HCT116 (cell line): ENCODE measurements at regions of chr12 and their contacts with region 1.

Region 1: GRCh38 chr12:47071241-47071852 is 8.1 kb upstream of the PCED1B start:
- DNase-seq: no peak
- ATAC-seq: peak; percentile 76
- H3K4me3 ChIP-seq: no peak overlapping the region
- H3K27ac ChIP-seq: no peak overlapping the region
- H3K4me1 ChIP-seq: no peaks in the 10 kb centered on the region
- H3K27me3 ChIP-seq: no peaks in the 10 kb centered on the region
- CTCF ChIP-seq: peak; percentile 37 to 69 (median 65); a peak in 5 of 6 replicates
- POLR2A ChIP-seq: no peak
- RAD21 ChIP-seq: peak; percentile 57

Region 2: DNA sequence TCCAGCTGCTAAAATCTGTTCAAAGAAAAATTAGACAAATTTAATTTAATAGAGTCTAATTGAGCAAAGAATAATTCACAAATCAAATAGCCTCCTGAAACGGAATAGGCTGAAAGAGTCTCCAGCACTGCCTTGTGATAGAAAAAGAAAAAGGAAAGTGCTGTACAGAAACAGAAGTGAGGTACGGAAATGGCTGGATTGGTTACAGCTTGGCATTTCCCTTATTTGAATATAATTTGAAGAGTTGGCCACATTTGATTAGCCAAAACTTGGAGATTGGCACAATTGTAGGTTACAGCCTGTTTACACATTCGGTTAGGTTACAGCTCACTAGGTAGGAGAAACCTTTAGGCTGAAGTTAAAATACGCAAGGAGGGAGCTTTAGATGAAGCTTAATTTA is 16.7 kb before region 1 on chr12:
- CTCF ChIA-PET with region 1: interaction called, 15 read pairs
- POLR2A ChIA-PET with region 1: no interaction called
- RAD21 ChIA-PET with region 1: no interaction called
- intact Hi-C with region 1: no loop called
- DNase-seq: no peak
- ATAC-seq: no peak
- H3K4me3 ChIP-seq: no peak overlapping the region
- H3K27ac ChIP-seq: no peak overlapping the region
- H3K4me1 ChIP-seq: no peaks in the 10 kb centered on the region
- H3K27me3 ChIP-seq: no peaks in the 10 kb centered on the region
- CTCF ChIP-seq: no peak
- POLR2A ChIP-seq: no peak
- RAD21 ChIP-seq: no peak

Region 3: DNA sequence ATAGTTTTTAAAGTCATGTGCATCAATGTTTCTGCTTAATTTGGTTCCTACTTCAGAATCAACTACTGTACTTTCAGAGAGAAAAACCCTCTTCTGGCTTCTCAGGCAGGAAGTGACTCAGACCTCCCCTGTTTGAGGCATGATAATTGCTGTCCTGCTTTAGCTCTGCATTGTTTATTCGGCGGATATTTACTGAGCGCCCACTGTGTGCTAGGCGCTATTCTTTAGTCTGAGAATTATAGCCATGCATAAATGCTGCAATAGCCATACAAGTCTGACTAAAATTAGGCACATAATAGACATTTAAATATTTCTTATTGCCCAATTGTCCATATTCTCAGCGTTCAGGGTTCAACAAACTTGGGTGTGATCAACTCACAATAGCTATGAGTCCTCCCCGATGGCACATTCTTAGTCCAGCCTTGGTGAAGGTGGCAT is 14.5 kb after region 1 on chr12:
- CTCF ChIA-PET with region 1: interaction called, 17 read pairs
- POLR2A ChIA-PET with region 1: no interaction called
- RAD21 ChIA-PET with region 1: no interaction called
- intact Hi-C with region 1: no loop called
- DNase-seq: no peak
- ATAC-seq: peak; percentile 65
- H3K4me3 ChIP-seq: peak overlapping the region in 1 of 2 experiments; percentile 42; a peak in 3 of 4 replicates
- H3K27ac ChIP-seq: no peak overlapping the region
- H3K4me1 ChIP-seq: peaks cover 16 to 60% of the 10 kb centered on the region in 2 experiments
- H3K27me3 ChIP-seq: no peaks in the 10 kb centered on the region
- CTCF ChIP-seq: no peak
- POLR2A ChIP-seq: no peak
- RAD21 ChIP-seq: no peak

Region 4: DNA sequence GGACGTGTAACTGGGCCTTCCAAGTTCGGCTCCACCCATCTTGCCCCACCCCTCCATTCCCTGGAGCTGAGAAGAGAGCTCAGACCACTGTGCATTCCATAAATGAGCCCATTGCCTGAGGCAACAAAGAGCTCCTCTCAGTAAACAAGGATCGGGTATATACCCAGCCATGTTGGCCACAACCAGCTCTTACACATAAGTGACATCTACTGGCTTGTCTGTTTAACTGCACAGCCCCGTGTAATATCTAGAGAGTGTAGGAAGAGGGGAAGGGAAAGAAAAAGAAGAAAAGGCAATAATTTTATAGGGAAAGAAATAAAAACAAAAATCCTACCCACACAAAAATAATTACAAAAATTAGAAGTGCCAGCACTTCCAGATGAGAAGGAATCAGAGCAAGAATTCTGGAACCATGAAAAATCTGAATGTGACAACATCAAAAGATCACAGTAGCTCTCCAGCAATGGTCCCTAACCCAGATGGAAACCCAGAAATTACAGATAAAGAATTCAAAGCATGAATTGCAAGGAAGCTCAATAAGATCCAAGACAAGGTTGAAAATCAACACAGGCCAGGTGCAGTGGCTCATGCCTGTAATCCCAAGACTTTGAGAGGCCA is 326.4 kb after region 1 on chr12:
- CTCF ChIA-PET with region 1: interaction called, 7 read pairs
- POLR2A ChIA-PET with region 1: no interaction called
- RAD21 ChIA-PET with region 1: no interaction called
- intact Hi-C with region 1: loop called (anchors 5 kb)
- DNase-seq: peak; percentile 34
- ATAC-seq: peak; percentile 99
- H3K4me3 ChIP-seq: no peak overlapping the region
- H3K27ac ChIP-seq: no peak overlapping the region
- H3K4me1 ChIP-seq: no peaks in the 10 kb centered on the region
- H3K27me3 ChIP-seq: no peaks in the 10 kb centered on the region
- CTCF ChIP-seq: peak; percentile 54 to 63 (median 54); a peak in 5 of 6 replicates
- POLR2A ChIP-seq: no peak
- RAD21 ChIP-seq: peak; percentile 81